ENCODE measurements at regions of chr4 and their contacts with region 1.

Region 1: DNA sequence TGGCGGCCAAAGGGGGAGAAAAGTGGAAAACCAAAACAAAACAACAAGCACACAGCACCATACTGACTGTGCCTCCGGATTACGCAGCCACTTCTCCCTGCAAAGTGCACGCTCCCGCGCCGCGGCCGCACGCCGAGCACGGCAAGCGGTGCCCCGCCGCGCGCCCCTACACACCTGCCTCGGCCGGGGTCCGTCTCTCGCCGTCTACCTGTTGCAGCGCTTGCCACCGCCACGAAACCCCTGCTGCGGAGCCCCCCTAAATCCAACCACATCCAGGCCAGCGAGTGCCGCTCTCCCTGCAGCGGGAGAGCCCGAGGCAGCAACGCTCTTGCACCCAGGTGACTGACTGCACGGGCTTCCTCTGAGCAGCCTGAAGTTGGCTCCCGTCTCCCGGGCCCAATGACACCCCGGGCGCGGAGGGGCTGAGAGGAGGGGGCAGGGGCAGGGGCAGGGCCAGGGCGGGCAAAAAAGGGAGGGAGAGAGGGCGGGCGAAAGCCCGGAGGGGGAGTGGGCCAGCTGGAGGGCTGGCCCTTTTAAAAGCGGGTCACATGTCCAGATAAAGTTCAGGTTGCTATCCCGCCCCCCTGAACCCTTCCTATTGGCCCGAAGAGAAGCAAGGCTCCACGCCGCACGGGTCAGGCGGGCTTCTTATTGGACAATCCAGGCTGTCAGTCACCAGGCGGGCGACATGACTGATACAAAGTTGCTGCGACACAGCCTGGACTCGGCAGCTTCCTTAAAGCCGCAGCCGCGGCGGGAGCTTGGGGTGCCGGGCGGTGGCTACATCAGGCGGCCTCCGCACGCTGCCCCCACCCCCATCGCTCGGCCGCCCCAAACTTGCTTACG is at the start of gene NR3C2:
- DNase-seq: peak; percentile 99
- H3K4me3 Mint-ChIP-seq: peak within 1 kb of the TSS; percentile 96
- H3K27ac Mint-ChIP-seq: peak within 1 kb of the TSS; percentile 79
- H3K4me1 Mint-ChIP-seq: peaks cover 48% of the 10 kb centered on the region
- H3K27me3 Mint-ChIP-seq: no peaks in the 10 kb centered on the region
- total RNA-seq, gene NR3C2: 5.3 to 6.1 TPM

Region 2: DNA sequence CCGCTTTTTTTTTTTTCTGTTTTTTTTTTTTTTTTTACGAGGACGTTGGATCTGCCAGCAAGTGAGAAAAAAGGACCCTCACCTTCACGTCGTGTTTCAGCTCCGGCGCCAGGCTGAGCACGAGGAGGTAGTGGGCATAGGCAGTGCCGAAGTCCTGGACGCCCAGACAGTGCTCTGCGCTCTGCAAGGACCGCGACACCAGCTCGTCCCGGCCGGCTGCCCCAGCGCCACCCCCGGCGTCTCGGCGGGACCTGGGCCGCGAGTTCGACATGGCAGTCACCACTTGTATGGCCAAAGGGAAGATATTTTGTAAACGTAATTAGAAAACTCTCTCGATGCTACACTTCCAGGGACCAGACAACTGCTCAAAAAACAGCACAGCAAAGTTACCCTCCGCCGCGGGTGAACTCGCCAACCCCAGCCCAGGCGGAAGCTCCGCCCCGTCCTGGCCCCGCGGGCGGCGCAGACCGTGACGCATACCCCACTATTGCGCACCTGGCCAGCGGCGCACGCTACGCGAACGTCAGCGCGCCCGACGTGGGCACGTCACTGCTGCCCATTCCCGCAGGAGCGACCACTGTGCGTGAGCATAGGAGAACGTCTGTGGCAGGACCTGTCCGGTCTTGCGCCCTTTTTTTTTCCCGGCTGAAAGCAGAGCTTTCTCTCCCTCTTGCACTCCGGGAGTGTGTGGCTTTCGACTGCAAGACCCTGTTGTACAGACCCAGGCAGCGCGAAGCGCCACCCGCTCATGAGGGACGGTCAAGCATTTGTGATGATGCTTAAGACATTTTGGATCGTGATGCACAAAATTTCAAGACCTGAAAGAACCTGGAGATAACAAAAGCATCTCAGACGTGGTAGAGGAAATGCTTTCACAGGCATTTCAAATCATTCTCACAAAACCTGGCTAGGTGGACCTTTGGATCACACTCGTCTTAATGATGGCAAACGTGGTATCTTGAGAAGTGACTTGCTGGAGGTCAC is 758.2 kb before region 1 on chr4 and contains the start of gene PRMT9:
- CTCF ChIA-PET with region 1: no interaction called
- intact Hi-C with region 1: loop called (anchors 2 kb)
- DNase-seq: peak; percentile 91
- H3K4me3 Mint-ChIP-seq: peak within 1 kb of the TSS; percentile 90
- H3K27ac Mint-ChIP-seq: peak within 1 kb of the TSS; percentile 91
- H3K4me1 Mint-ChIP-seq: peaks cover 19% of the 10 kb centered on the region
- H3K27me3 Mint-ChIP-seq: no peaks in the 10 kb centered on the region
- total RNA-seq, gene PRMT9: 7.3 to 8.2 TPM

Region 3: DNA sequence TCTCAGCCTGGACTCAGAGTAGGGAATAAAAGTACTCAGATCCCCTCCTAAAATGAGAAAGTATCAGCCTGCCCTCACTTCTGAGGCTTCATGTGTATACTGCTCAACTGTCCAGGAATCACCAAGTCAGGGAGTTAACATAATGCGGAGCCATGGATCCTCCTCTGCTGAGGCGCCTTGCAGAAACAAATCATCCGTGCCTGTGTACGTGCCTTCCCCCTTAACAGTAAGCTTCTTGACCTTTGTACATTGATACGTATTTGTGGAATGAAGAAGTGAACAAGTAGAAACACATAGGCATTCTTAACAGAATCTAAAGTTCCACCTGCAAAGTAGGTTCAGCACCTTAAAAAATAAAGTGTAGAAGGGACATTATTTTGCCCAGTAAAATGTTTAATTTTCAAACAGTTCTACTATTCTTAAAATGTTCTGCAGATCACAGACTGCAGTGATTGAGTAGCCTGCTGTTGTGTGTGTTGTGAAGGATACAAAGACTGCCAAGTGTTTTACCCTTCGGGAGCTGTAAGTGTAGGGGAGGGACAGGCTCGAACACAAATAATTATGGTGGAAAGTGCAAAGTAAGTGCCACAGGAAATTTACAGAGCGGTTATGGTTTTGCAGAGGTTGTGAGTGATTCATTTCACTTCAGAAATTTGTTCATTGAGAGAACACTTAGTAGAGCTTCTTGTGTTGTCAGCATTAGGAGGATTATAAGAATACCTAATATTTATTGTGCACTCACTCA is 648.5 kb before region 1 on chr4:
- CTCF ChIA-PET with region 1: no interaction called
- intact Hi-C with region 1: loop called (anchors 5 kb)
- DNase-seq: no peak
- H3K4me3 Mint-ChIP-seq: no peak overlapping the region
- H3K27ac Mint-ChIP-seq: no peak overlapping the region
- H3K4me1 Mint-ChIP-seq: peaks cover 31% of the 10 kb centered on the region
- H3K27me3 Mint-ChIP-seq: no peaks in the 10 kb centered on the region

Region 4: GRCh38 chr4:148056869-148057268 is 385.3 kb before region 1 on chr4:
- CTCF ChIA-PET with region 1: interaction called, 3 read pairs
- intact Hi-C with region 1: loop called (anchors 2 kb)
- DNase-seq: peak; percentile 81
- H3K4me3 Mint-ChIP-seq: no peak overlapping the region
- H3K27ac Mint-ChIP-seq: no peak overlapping the region
- H3K4me1 Mint-ChIP-seq: peaks cover 76% of the 10 kb centered on the region
- H3K27me3 Mint-ChIP-seq: no peaks in the 10 kb centered on the region

Region 5: GRCh38 chr4:148216866-148217814 is 225.1 kb before region 1 on chr4:
- CTCF ChIA-PET with region 1: no interaction called
- intact Hi-C with region 1: loop called (anchors 2 kb)
- DNase-seq: peak; percentile 25
- H3K4me3 Mint-ChIP-seq: peak overlapping the region; percentile 63
- H3K27ac Mint-ChIP-seq: peak overlapping the region; percentile 15
- H3K4me1 Mint-ChIP-seq: peaks cover 25% of the 10 kb centered on the region
- H3K27me3 Mint-ChIP-seq: no peaks in the 10 kb centered on the region

Region 6: GRCh38 chr4:148283665-148284064 is 158.5 kb before region 1 on chr4:
- CTCF ChIA-PET with region 1: no interaction called
- intact Hi-C with region 1: no loop called
- DNase-seq: no peak
- H3K4me3 Mint-ChIP-seq: no peak overlapping the region
- H3K27ac Mint-ChIP-seq: no peak overlapping the region
- H3K4me1 Mint-ChIP-seq: peaks cover 23% of the 10 kb centered on the region
- H3K27me3 Mint-ChIP-seq: no peaks in the 10 kb centered on the region

Region 7: DNA sequence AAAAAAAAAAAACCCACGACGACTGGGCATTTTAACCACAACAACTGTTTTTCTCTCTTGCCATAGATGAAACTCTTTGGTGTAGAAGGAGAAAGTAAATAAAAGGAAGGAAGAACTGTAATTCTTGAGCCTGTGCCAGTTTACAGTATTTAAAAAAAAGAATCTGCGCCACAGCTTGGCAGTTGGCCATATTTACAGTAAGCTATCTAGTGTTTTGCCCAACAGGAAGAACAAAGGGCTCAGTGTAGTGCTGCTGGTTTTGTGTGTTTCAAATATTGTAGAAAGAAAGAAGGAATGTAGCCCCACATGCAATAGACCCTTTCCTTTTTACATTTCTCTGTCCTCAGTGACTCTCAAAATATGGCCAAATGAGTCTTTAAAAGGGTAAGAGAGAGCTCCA is 66.1 kb before region 1 on chr4:
- CTCF ChIA-PET with region 1: no interaction called
- intact Hi-C with region 1: loop called (anchors 1 kb)
- DNase-seq: peak; percentile 53
- H3K4me3 Mint-ChIP-seq: peak overlapping the region; percentile 68
- H3K27ac Mint-ChIP-seq: peak overlapping the region; percentile 80
- H3K4me1 Mint-ChIP-seq: peaks cover 32% of the 10 kb centered on the region
- H3K27me3 Mint-ChIP-seq: no peaks in the 10 kb centered on the region

Region 8: GRCh38 chr4:148469938-148470337 is 27.7 kb after region 1 on chr4:
- CTCF ChIA-PET with region 1: no interaction called
- intact Hi-C with region 1: no loop called
- DNase-seq: no peak
- H3K4me3 Mint-ChIP-seq: no peak overlapping the region
- H3K27ac Mint-ChIP-seq: no peak overlapping the region
- H3K4me1 Mint-ChIP-seq: no peaks in the 10 kb centered on the region
- H3K27me3 Mint-ChIP-seq: no peaks in the 10 kb centered on the region

Region 9: GRCh38 chr4:149031399-149031798 is 589.2 kb after region 1 on chr4:
- CTCF ChIA-PET with region 1: no interaction called
- intact Hi-C with region 1: loop called (anchors 5 kb)
- DNase-seq: peak; percentile 7
- H3K4me3 Mint-ChIP-seq: no peak overlapping the region
- H3K27ac Mint-ChIP-seq: no peak overlapping the region
- H3K4me1 Mint-ChIP-seq: no peaks in the 10 kb centered on the region
- H3K27me3 Mint-ChIP-seq: no peaks in the 10 kb centered on the region